Mucosa of descending colon (tissue), 3 donors: ENCODE measurements at regions of chr2 and their contacts with region 1.

Region 1: DNA sequence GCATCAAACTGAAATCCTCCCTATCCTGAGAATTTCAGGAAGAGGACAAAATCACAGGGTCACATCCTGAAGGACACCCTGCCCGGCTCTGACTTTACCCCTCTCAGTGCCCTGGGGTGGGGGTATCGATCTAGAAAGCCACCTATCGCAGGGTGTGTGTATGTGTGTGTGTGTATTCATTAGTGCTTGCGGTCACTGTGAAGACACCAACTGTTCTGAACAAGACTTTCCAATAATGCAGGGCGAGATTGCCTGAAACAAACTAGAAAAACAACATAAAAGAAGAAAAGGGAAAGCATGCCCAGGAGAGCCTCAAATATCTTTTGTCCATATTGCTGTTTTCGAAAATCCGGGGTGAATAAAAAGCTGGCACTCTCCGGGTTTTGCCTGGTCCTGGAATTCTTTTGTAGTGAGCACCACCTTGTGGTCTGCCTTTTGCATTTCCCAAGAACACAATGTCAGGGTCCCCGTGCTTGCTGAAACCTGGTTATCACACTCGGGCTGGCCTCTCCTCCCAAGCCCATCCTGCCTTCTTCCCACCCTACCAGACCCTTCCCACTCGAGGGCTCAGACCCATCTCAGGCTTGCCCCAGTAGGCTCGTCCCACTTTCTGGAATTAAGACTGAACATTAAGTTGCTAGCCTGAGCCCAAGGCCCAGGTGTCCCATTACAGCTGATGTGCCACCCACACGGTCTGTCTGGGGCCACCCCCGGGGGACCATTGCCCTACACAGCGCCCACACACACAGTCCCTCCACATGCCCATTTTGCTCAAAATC is 25.0 kb upstream of the COPS8 start:
- DNase-seq: peak in 1 of 3 donors; percentile 62
- ATAC-seq: peak; percentile 58
- H3K4me3 ChIP-seq: no peak overlapping the region
- H3K4me1 ChIP-seq: no peaks in the 10 kb centered on the region
- CTCF ChIP-seq: no peak

Region 2: DNA sequence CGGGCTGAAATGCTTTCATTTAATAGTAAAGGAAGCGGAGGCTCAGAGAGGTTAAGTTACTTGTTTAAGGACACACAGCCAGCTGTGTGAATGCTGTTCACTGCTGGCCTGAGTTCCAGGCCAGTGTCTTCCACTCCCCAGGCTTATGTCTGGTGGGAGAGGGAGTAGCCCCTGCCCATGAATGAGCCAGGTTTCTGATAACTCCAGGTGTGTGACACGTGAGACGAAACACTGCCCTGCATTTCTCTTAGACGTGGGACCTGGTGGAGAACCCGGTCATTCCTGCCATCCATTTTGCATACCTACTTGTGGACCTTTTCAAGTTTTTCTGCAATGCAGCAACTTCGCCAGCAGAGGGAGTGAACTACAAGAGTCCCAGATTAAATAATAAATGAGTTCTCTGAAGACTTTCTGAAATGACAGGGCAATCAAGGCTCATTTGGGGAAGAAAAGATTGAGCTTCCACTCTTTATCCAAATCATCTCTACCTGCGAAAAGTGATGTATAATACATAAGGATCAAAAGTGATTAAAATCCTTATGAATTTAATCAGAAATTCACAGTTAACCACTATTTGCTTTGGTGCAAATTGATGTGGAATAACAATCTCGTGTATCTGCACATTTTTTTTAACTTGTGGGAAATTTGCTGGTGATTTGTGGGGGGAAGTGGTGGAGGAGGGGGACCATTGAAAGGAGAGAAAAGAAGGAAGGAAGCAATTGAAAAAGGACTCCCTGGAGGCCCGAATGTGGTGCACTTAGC is 717.1 kb before region 1 on chr2:
- intact Hi-C with region 1: loop called in 1 of 2 experiments (anchors 10 kb)
- DNase-seq: peak in 1 of 3 donors; percentile 69
- ATAC-seq: peak; percentile 68
- H3K4me3 ChIP-seq: no peak overlapping the region
- H3K4me1 ChIP-seq: no peaks in the 10 kb centered on the region
- CTCF ChIP-seq: peak; percentile 64